ENCODE measurements at regions of chrX and their contacts with region 1.

Region 1: DNA sequence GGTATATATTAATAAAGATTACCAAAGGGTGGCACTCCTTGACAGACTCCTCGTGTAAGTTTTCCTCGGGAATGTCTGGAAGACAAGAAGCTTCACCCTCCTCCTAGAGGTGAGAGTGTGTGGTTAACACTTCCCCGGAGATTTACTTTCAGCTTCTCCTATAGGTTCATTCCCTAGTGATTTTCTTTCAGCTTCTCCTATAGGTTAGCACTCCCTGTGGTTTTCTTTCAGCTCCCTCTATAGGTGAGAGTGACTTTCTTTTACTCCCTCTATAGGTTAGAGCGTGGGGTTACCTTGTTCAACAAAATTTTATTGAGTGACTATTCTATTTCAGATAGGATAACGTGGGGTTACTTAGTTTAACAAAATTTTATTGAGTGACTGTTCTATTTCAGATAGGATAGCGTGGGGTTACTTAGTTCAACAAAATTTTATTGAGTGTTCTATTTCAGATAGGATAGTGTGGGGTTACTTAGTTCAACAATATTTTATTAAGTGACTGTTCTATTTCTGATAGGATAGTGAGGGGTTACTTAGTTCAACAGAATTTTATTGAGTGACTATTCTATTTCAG is 106.0 kb upstream of the PLAC1 start:
- DNase-seq: peak; percentile 80
- H3K4me3 ChIP-seq: no peak overlapping the region
- H3K27ac ChIP-seq: no peak overlapping the region
- H3K4me1 ChIP-seq: no peaks in the 10 kb centered on the region
- H3K27me3 ChIP-seq: no peaks in the 10 kb centered on the region
- CTCF ChIP-seq: peak; percentile 54

Region 2: DNA sequence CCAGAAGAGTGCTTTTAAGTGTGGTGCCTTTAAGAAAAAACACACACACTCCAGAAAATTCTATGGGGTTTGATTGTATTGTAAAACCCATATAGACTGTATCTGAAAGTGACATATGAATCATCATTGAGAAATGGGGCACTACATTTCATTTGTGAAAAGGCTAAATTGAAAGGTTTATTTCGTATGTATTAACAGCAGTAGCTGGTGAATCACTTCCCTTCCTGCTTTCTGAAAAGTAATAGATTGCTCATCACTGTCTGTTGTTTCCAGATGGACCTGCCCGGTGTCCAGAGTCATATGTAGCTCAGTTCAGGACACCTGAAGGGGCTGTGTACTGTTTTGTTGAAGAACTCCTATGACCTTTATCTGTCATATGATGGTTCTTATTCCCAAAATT is 332.4 kb before region 1 on chrX:
- CTCF ChIA-PET with region 1: no interaction called
- POLR2A ChIA-PET with region 1: interaction called, 15 read pairs
- intact Hi-C with region 1: no loop called
- DNase-seq: peak; percentile 17
- H3K4me3 ChIP-seq: no peak overlapping the region
- H3K27ac ChIP-seq: no peak overlapping the region
- H3K4me1 ChIP-seq: no peaks in the 10 kb centered on the region
- H3K27me3 ChIP-seq: no peaks in the 10 kb centered on the region
- CTCF ChIP-seq: no peak

Region 3: GRCh38 chrX:134484039-134484438 is 280.3 kb before region 1 on chrX:
- CTCF ChIA-PET with region 1: no interaction called
- POLR2A ChIA-PET with region 1: no interaction called
- intact Hi-C with region 1: loop called (anchors 5 kb)
- DNase-seq: peak; percentile 64
- H3K4me3 ChIP-seq: no peak overlapping the region
- H3K27ac ChIP-seq: no peak overlapping the region
- H3K4me1 ChIP-seq: no peaks in the 10 kb centered on the region
- H3K27me3 ChIP-seq: no peaks in the 10 kb centered on the region
- CTCF ChIP-seq: peak; percentile 67

Region 4: GRCh38 chrX:134520860-134521390 is 243.4 kb before region 1 on chrX:
- CTCF ChIA-PET with region 1: interaction called, 7 read pairs
- POLR2A ChIA-PET with region 1: no interaction called
- intact Hi-C with region 1: loop called (anchors 5 kb)
- DNase-seq: peak; percentile 60
- H3K4me3 ChIP-seq: no peak overlapping the region
- H3K27ac ChIP-seq: no peak overlapping the region
- H3K4me1 ChIP-seq: no peaks in the 10 kb centered on the region
- H3K27me3 ChIP-seq: no peaks in the 10 kb centered on the region
- CTCF ChIP-seq: peak; percentile 67

Measured in A673 (cell line).